OCI-LY7 (cell line): ENCODE measurements at regions of chr4 and their contacts with region 1.

Region 1: DNA sequence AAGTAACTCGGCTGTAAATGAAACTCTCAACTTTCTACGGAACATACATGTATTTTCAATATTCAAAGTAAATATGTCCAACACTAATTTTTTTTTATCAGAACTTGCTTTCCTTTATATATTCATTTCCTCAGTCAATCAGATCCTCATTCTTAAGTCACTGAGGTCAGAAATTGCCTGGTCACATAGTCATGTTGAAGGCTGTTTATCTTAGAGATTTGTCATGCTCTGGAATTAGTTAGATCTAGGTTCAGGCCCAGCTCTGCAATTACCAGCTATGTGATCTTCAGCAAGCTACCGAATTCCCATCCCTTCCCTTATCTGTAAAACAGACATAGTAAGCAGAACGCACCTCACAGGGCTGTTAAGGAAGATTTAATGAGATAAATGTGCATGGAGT is 228.8 kb downstream of the SPCS3 start:
- DNase-seq: no peak
- H3K4me3 ChIP-seq: no peak overlapping the region
- H3K27ac ChIP-seq: no peak overlapping the region
- H3K4me1 ChIP-seq: no peaks in the 10 kb centered on the region
- CTCF ChIP-seq: no peak

Region 2: DNA sequence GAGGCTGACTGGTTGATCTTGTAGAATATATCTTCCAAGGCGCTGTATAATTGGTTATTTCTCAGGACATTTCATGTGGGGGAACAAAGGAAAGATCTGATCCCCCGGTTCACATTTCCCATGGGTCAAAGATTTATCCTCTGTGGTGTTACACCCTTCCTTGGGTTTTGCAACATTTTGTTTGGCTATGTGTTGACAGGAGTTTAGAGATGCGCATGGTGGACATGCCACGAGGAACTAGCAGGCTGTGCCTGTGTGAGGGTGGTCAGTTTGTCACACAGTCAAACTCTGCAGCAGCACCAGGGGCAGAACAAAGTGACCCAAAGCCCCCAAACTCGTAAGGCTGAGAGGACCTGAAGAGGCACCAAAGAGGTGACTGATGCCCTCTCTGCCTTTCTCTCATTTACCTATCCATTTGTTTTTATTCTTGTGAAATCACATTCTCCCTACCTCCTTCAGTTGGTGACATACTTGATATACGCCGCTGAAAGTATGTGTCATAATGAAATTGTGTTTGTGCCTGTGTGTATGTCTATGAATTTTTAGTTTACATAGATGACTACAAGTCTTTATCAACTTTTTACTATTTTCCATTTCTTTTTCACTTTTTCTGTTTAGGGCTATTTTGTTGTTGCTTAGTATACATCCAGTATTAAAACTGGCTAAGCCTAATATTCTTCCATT is 64.1 kb before region 1 on chr4:
- CTCF ChIA-PET with region 1: no interaction called
- POLR2A ChIA-PET with region 1: no interaction called
- intact Hi-C with region 1: loop called (anchors 1 kb)
- DNase-seq: no peak
- H3K4me3 ChIP-seq: no peak overlapping the region
- H3K27ac ChIP-seq: no peak overlapping the region
- H3K4me1 ChIP-seq: no peaks in the 10 kb centered on the region
- CTCF ChIP-seq: no peak